Activated CD4-positive, alpha-beta memory T cell treated with anti-CD3 and anti-CD28 coated beads, Interleukin-2, amount 10 ng/mL, durations not matched to agents 7 days and 5 days (primary cell): ENCODE measurements at regions of chr14 and their contacts with region 1.

Region 1: GRCh38 chr14:94173885-94174603 is at the start of gene PPP4R4:
- DNase-seq: peak; percentile 92
- H3K4me3 Mint-ChIP-seq: peak within 1 kb of the TSS; percentile 77
- H3K27ac Mint-ChIP-seq: peak within 1 kb of the TSS; percentile 62
- H3K4me1 Mint-ChIP-seq: peaks cover 27% of the 10 kb centered on the region
- H3K27me3 Mint-ChIP-seq: peaks cover 37% of the 10 kb centered on the region
- total RNA-seq, gene PPP4R4: 3.3 to 4.9 TPM

Region 2: DNA sequence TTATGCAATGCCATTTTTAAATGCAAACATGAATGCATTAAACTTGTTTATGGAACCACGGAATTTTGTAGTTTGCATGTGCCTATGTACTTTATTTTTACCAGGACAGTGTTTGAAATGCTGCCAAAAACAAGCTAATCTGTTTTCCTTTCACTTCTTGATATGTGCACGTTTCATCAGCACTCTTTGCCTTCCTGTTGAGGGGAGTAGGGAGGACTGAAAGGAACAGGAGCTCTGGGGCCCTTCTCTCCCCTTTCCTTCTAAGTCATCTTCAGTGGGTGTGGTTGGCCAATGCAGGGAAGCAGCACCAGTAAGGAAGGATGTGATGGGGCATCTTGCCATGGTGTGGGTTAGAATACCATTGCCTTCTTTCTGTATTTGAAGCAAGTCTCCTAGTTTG is 12.1 kb before region 1 on chr14:
- CTCF ChIA-PET with region 1: interaction called, 15 read pairs
- POLR2A ChIA-PET with region 1: interaction called, 20 read pairs
- DNase-seq: no peak
- H3K4me3 Mint-ChIP-seq: no peak overlapping the region
- H3K27ac Mint-ChIP-seq: peak overlapping the region; percentile 29
- H3K4me1 Mint-ChIP-seq: peaks cover 69% of the 10 kb centered on the region
- H3K27me3 Mint-ChIP-seq: no peaks in the 10 kb centered on the region